GM13976 (cell line): ENCODE measurements at regions of chr7 and their contacts with region 1.

Region 1: DNA sequence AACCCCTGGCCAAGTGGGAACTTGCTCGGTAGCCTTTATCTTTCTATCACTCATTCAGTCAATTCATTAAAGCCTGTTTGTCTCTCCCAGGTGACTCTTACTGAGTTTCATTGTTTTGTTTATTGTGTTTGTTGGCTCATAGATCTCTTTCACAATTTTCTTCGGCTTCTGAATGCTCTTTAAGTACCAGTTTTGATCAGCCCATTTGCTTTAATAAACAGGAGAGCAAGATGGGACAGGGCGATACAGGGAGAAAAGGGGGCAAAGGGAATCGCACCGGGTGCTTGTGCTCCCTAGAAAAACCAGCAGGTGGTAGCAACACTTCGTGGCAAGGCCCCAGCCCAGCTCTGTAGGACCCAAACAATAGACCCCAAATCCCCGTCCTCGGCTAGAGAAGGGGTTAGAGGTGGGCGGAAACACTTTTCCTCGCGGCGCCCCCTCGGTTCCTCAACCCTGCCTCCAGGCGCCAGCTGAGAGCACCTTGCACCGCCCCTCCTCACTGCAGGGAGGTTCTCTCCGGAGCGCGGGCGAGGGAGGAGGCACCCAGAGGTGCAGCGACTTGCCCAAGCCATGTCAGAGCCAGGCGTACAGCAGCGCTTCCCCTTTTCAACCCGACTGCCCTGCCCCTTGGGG is 1.0 kb upstream of the EPHB6 start:
- DNase-seq: peak; percentile 84
- CTCF ChIP-seq: peak; percentile 39

Region 2: GRCh38 chr7:143073556-143073955 is 219.7 kb after region 1 on chr7:
- in situ Hi-C with region 1: no loop called
- DNase-seq: no peak
- CTCF ChIP-seq: no peak

Region 3: GRCh38 chr7:143199040-143199439 is 345.2 kb after region 1 on chr7:
- in situ Hi-C with region 1: loop called (anchors 10 kb)
- DNase-seq: no peak
- CTCF ChIP-seq: no peak

Region 4: GRCh38 chr7:143467722-143468121 is 613.9 kb after region 1 on chr7:
- in situ Hi-C with region 1: no loop called
- DNase-seq: no peak
- CTCF ChIP-seq: no peak